ENCODE measurements at regions of chr2 and their contacts with region 1.

Region 1: GRCh38 chr2:219530048-219530963 is 13.3 kb downstream of the CHPF start:
- DNase-seq: peak; percentile 96
- H3K4me3 ChIP-seq: peak overlapping the region in 1 of 8 donors; percentile 1
- H3K27ac ChIP-seq: no peak overlapping the region
- H3K4me1 ChIP-seq: peaks cover 0 to 9% (median 6%) of the 10 kb centered on the region in 6 donors
- H3K27me3 ChIP-seq: peaks cover 5 to 83% (median 45%) of the 10 kb centered on the region in 7 donors
- CTCF ChIP-seq: peak; percentile 92 to 98 (median 94)
- POLR2A ChIP-seq: no peak

Region 2: DNA sequence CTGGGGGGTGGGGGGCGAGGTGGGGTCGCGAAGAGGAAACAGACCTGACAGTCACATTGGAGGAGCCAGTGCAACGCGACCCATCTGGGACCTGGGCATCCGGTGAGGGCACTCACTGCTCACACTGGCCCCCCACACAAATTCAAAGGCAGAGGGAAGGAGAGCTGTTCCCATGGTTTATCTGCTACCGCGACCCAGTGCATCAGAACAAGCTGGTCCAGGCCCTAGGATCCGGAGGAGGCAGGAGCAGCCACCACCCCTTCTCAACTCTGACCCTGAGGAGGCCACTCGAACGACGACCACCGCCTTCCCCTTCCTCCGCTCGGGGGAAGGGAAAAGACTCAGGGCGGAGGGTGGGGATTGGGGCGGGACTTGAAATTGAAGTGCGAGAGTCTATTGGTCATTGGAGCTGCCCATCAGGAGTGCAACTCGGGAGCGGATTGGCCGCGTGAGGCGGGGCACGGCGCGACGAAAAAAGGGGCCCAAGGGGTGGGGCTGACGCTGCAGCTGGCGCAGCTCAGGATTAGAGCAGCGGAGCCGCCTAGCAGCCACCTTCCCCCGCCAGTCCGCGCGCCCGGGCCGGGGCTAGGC is 571.1 kb before region 1 on chr2 and contains the start of gene CDK5R2:
- intact Hi-C with region 1: no loop called
- DNase-seq: peak; percentile 86
- H3K4me3 ChIP-seq: peak within 1 kb of the TSS; percentile 25 to 72 (median 42)
- H3K27ac ChIP-seq: no peak within 1 kb of the TSS
- H3K4me1 ChIP-seq: peaks cover 3 to 43% (median 27%) of the 10 kb centered on the region in 6 donors
- H3K27me3 ChIP-seq: peaks cover 0 to 97% (median 57%) of the 10 kb centered on the region in 7 donors
- CTCF ChIP-seq: no peak
- POLR2A ChIP-seq: no peak
- total RNA-seq, gene CDK5R2: not detected

Region 3: GRCh38 chr2:219402665-219403515 is 127.4 kb before region 1 on chr2:
- intact Hi-C with region 1: loop called (anchors 2 kb)
- DNase-seq: no peak
- H3K4me3 ChIP-seq: no peak overlapping the region
- H3K27ac ChIP-seq: no peak overlapping the region
- H3K4me1 ChIP-seq: peaks cover 0 to 14% (median 7%) of the 10 kb centered on the region in 6 donors
- H3K27me3 ChIP-seq: peaks cover 0 to 25% (median 0%) of the 10 kb centered on the region in 7 donors
- CTCF ChIP-seq: peak; percentile 72 to 93 (median 87)
- POLR2A ChIP-seq: no peak

Region 4: GRCh38 chr2:219475697-219476651 is 54.3 kb before region 1 on chr2:
- intact Hi-C with region 1: loop called (anchors 10 kb)
- DNase-seq: no peak
- H3K4me3 ChIP-seq: no peak overlapping the region
- H3K27ac ChIP-seq: no peak overlapping the region
- H3K4me1 ChIP-seq: peaks cover 0 to 8% (median 2%) of the 10 kb centered on the region in 6 donors
- H3K27me3 ChIP-seq: peaks cover 0 to 62% (median 0%) of the 10 kb centered on the region in 7 donors
- CTCF ChIP-seq: peak in 10 of 11 experiments; percentile 25 to 83 (median 68)
- POLR2A ChIP-seq: no peak

Measured in spleen (tissue), 13 donors.